ENCODE measurements at regions of chr1 and their contacts with region 1.

Region 1: DNA sequence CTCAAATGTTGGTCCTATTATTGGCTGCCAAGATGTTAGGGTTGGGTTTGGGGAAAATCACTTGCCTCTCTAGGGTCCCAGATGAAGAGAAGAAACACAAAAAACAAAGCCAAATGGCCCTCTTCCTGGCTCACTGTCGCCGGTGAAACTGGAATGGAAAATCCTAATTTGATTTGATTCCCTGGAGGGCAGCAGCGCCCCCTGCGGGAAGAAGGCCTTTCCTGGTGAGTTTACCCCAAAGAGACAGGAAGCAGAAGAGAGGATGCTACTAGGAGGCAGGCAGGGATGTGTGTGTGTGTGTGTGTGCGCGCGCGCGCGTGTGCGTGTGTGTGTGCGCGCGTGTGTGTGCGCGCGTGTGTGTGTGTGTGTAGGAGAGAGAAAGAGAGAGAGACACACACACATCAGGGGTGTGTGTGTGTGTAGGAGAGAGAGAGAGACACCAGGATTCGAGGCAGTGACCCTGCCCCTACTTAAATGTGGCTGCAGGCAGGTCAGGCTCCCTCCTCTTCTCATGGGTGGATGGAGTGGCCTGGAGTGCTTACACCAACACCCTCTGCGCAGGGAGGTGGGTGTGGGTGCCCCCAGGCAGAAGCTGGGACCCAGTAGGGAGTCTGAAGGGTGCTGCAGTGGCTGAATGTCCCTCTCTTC is 3.1 kb upstream of the SELENON start:
- DNase-seq: peak; percentile 72
- H3K4me3 ChIP-seq: no peak overlapping the region
- H3K27ac ChIP-seq: no peak overlapping the region
- H3K27me3 ChIP-seq: no peaks in the 10 kb centered on the region
- CTCF ChIP-seq: peak; percentile 90

Region 2: DNA sequence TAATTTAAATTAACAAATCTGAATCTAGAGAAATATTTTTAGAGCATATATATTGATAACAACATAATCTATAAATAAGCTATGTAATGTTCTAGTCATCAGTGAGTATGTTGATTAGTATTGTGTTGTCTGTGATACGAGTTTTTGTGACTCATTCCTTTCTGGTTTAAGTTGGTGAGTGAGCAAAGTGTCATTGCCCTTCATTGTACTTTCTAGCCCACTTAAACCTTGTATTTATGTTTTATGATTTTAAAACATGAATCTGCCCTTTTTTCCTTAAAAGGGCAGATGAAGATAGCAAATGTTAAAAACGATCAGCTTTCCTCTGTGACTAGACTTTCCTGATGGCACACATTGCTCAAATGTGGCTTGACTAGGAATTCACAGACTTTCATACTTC is 327.8 kb before region 1 on chr1:
- in situ Hi-C with region 1: no loop called
- DNase-seq: peak; percentile 40
- H3K4me3 ChIP-seq: no peak overlapping the region
- H3K27ac ChIP-seq: peak overlapping the region; percentile 67
- H3K27me3 ChIP-seq: no peaks in the 10 kb centered on the region
- CTCF ChIP-seq: no peak

Region 3: GRCh38 chr1:25616095-25616986 is 180.6 kb before region 1 on chr1 and contains the start of gene MAN1C1:
- in situ Hi-C with region 1: loop called (anchors 25 kb)
- DNase-seq: peak; percentile 10
- H3K4me3 ChIP-seq: peak within 1 kb of the TSS; percentile 49
- H3K27ac ChIP-seq: no peak within 1 kb of the TSS
- H3K27me3 ChIP-seq: peaks cover 64% of the 10 kb centered on the region
- CTCF ChIP-seq: peak; percentile 44

Region 4: DNA sequence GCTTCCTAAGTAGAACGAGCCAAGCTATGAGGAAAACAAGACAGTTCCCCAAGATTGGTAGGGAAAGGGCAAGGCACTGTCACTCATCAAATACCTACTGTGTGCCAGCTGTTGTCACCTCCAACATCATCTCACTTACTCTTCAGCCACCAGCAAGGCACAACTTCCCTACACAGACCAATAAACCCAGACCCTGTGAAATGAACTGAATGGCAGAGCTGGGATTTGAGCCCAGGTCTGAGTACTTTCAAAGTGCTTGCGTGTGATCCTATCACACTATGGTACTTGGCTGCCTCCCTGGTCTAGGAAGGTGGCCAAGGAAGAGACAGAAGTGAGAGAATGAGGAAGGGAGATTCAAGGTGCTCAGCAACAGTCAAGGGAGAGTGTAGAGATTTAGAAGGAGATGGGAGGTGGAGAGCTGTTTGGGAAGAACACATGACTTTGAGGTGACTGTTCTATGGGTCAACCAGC is 287.2 kb after region 1 on chr1:
- in situ Hi-C with region 1: no loop called
- DNase-seq: no peak
- H3K4me3 ChIP-seq: no peak overlapping the region
- H3K27ac ChIP-seq: no peak overlapping the region
- H3K27me3 ChIP-seq: peaks cover 4% of the 10 kb centered on the region
- CTCF ChIP-seq: no peak

Measured in brain microvascular endothelial cell (primary cell).